ENCODE measurements at regions of chr5 and their contacts with region 1.

Region 1: DNA sequence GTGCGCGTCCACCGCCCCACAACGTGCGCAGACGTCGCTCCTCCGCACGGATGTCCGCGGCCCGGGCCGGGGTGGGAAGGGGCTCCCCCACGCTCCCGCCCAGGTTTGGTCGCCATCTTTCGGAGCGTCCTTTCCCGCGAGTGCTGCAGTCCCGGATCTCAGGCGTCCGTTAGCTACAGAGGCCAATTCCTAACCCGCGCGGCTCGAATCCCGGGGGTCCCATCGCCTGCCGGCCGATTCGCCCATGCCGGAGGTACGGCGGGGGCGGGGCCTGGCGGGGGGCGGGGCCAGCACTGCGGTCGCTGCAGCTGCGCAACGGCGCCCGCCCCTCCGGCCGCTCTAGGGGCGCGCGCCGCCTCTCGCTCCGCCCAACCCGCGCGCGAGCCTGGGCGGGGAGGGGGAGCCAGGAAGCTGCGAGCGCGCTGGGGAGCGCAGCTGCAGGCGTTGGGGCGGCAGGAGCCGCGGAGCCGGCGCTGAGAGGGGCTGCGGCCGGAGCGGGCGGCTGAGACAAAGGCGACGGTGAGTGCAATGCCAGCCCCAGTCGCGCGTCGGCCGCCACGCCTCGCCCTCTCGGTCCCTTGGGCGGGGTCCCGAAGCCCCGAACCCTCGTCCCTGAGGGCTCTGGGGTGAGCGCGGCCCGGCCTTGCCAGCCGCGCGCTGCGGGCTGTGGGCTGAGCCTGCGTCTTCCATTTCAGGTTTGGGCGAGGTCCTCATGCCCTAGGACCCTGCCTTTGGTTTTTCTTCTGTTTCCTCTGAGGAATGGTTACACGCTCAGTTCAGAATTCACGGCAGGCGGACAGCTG is at the start of gene CDC42SE2:
- DNase-seq: peak; percentile 88 to 95 (median 94)
- H3K4me3 ChIP-seq: peak within 1 kb of the TSS; percentile 96 to 100 (median 99)
- H3K27ac ChIP-seq: peak within 1 kb of the TSS; percentile 92 to 94
- H3K4me1 ChIP-seq: peaks cover 14 to 52% (median 23%) of the 10 kb centered on the region in 4 experiments
- H3K27me3 ChIP-seq: no peaks in the 10 kb centered on the region

Region 2: GRCh38 chr5:130568791-130569190 is 695.1 kb before region 1 on chr5:
- CTCF ChIA-PET with region 1: no interaction called
- POLR2A ChIA-PET with region 1: no interaction called
- DNase-seq: no peak
- H3K4me3 ChIP-seq: no peak overlapping the region
- H3K27ac ChIP-seq: no peak overlapping the region
- H3K4me1 ChIP-seq: no peaks in the 10 kb centered on the region
- H3K27me3 ChIP-seq: no peaks in the 10 kb centered on the region

Region 3: DNA sequence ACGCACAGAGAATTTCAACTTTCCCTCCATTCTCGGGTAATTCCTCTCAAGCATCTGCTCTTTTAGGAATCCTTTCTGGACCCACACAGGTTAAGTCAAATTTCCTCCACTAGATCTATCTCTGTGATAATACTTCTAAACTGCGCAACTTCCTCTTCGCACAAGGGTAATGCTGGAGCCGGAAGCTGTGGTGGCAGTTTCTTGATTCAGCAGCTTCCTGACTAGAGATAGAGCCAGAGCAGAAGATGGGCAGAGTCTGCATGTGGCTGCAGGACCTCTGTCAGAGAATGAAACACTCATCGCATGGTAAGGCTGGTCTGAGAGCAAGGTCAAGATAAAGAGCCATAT is 11.1 kb before region 1 on chr5:
- CTCF ChIA-PET with region 1: interaction called, 56 read pairs
- POLR2A ChIA-PET with region 1: interaction called, 10 read pairs
- DNase-seq: peak; percentile 92 to 97 (median 96)
- H3K4me3 ChIP-seq: peak overlapping the region in 5 of 7 experiments; percentile 12 to 48 (median 23)
- H3K27ac ChIP-seq: peak overlapping the region; percentile 40 to 64
- H3K4me1 ChIP-seq: peaks cover 30 to 63% (median 47%) of the 10 kb centered on the region in 4 experiments
- H3K27me3 ChIP-seq: no peaks in the 10 kb centered on the region

Region 4: GRCh38 chr5:131277875-131278740 is 14.3 kb after region 1 on chr5:
- CTCF ChIA-PET with region 1: interaction called, 35 read pairs
- POLR2A ChIA-PET with region 1: no interaction called
- DNase-seq: peak in 2 of 3 donors; percentile 40 to 44
- H3K4me3 ChIP-seq: no peak overlapping the region
- H3K27ac ChIP-seq: no peak overlapping the region
- H3K4me1 ChIP-seq: peaks cover 16 to 46% (median 32%) of the 10 kb centered on the region in 4 experiments
- H3K27me3 ChIP-seq: no peaks in the 10 kb centered on the region

Region 5: GRCh38 chr5:131285703-131286394 is 22.0 kb after region 1 on chr5:
- CTCF ChIA-PET with region 1: interaction called, 13 read pairs
- POLR2A ChIA-PET with region 1: no interaction called
- DNase-seq: peak in 1 of 3 donors; percentile 53
- H3K4me3 ChIP-seq: no peak overlapping the region
- H3K27ac ChIP-seq: no peak overlapping the region
- H3K4me1 ChIP-seq: peaks cover 8 to 33% (median 19%) of the 10 kb centered on the region in 4 experiments
- H3K27me3 ChIP-seq: no peaks in the 10 kb centered on the region

Region 6: DNA sequence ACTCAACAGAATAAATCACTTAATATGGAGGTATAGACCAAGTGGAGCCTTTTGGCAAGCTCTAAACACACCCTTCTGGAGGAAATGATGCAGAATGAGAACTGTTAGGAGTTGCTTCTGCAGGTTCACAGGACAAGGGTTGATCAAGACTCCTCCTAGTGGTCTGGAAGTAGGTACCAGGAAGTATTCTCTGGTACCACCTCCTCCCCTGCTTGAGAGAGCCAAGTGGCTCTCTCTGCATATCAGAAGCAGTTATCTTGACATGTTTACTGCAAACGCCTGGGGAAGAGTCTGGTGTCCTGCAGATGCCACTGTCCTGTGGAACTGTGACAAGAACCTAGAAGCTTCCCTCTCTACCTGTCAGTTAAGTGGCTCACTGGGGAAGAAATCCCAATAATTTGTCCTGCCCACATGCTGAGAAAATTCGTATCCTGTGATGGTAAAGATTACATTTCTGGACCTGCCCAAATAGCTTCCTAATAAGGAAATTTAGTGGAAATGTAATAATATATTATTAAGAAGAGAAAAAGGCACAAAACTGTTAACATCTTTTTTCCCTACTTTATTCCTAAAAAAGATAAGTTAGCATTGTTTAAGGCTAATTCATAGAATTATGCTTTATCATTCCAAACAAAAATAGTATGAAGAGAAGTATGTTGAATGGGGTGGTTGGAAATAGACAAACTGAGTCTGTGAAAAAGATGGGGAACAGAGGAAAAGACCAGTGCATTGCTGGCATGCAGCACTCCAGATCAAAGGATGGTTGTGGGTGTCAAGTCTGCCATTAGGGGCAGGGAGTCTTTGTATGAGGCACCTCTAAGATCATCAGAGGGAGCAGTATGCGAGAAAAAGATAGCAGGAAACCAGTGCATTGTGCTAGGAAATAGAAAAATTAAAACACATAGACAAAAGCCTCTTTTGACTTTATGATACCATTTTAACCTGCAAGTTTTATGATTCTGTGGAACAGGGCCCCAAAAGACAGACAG is 118.9 kb after region 1 on chr5:
- CTCF ChIA-PET with region 1: interaction called, 95 read pairs
- POLR2A ChIA-PET with region 1: interaction called, 6 read pairs
- DNase-seq: peak; percentile 85 to 94 (median 92)
- H3K4me3 ChIP-seq: peak overlapping the region in 1 of 7 experiments; percentile 41
- H3K27ac ChIP-seq: peak overlapping the region; percentile 99
- H3K4me1 ChIP-seq: peaks cover 44 to 71% (median 64%) of the 10 kb centered on the region in 4 experiments
- H3K27me3 ChIP-seq: no peaks in the 10 kb centered on the region

Region 7: GRCh38 chr5:131400585-131400984 is 136.7 kb after region 1 on chr5:
- CTCF ChIA-PET with region 1: no interaction called
- POLR2A ChIA-PET with region 1: no interaction called
- DNase-seq: no peak
- H3K4me3 ChIP-seq: no peak overlapping the region
- H3K27ac ChIP-seq: no peak overlapping the region
- H3K4me1 ChIP-seq: peaks cover 0 to 9% (median 2%) of the 10 kb centered on the region in 4 experiments
- H3K27me3 ChIP-seq: no peaks in the 10 kb centered on the region